GM23248 (cell line): ENCODE measurements at regions of chr9 and their contacts with region 1.

Region 1: DNA sequence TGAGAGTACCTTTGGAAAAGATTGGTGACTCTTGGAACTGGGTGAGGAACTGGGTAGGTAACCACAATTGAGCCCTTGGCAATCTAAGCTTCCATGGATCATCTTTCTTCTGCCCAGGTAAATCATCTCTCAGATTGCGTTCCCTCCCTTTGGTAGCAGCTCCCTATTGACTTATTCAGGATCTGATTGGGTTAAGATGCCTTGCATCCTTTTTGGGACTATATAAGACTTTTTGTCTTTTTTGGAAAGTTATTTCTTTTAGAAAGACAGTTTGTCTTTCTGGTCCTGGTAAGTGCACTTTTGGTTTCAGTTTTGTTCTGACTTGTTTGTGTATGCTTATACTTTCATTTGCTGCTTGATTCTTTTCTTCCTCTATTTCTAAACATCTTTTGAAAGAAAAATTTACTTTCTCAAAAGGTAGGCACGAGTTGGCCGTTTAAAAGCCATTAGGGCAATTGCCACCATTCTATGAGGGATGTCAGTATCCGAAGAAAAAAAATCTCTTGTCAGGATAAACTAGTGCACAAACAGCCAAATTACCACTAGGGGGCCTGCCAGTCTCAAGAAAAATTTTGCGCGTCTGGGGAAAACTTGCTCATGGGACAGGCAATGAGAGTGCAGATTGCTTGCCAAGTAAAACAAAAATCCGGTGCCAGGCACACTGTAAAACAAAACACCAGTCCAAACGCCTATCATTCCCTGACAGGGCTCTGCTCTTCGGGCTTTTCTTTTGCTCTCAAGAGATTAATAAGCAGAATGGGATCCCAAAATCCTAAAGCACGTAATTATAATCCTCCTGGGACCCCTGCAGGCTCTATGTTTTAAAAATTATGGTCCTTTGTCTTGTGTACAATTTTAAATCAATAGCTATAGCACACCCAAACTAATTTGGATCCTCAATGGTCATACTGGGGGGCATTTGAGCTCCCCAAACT is 12.8 kb downstream of the OR1J1 start:
- DNase-seq: peak; percentile 97
- H3K4me3 ChIP-seq: peak overlapping the region; percentile 76
- H3K27ac ChIP-seq: peak overlapping the region; percentile 43
- H3K4me1 ChIP-seq: peaks cover 25% of the 10 kb centered on the region
- H3K27me3 ChIP-seq: no peaks in the 10 kb centered on the region

Region 2: GRCh38 chr9:122810306-122810946 is 345.5 kb after region 1 on chr9:
- in situ Hi-C with region 1: loop called (anchors 5 kb)
- DNase-seq: peak; percentile 79
- H3K4me3 ChIP-seq: no peak overlapping the region
- H3K27ac ChIP-seq: no peak overlapping the region
- H3K4me1 ChIP-seq: peaks cover 7% of the 10 kb centered on the region; the same call in 1 of the 2 replicates
- H3K27me3 ChIP-seq: no peaks in the 10 kb centered on the region